Activated T-helper 1 cell treated with anti-CD3 and anti-CD28 coated beads, Interleukin-12 subunit alpha, Interleukin-12 subunit beta, Interleukin-2, Interleukin-4 antibody, amounts not matched to agents 30 ng/mL and 10 ng/mL and 1 ng/mL, durations not matched to agents 14 hours and 24 hours and 36 hours (primary cell): ENCODE measurements at regions of chr2 and their contacts with region 1.

Region 1: GRCh38 chr2:157628477-157629415 is at the start of gene ACVR1C:
- DNase-seq: peak; percentile 63
- H3K4me3 Mint-ChIP-seq: peak within 1 kb of the TSS; percentile 88
- H3K27ac Mint-ChIP-seq: peak within 1 kb of the TSS; percentile 55
- H3K4me1 Mint-ChIP-seq: peaks cover 28% of the 10 kb centered on the region
- H3K27me3 Mint-ChIP-seq: peaks cover 15% of the 10 kb centered on the region
- total RNA-seq, gene ACVR1C: 0.59 and 1.1 TPM in 2 replicates

Region 2: GRCh38 chr2:157261199-157261783 is 367.5 kb before region 1 on chr2:
- intact Hi-C with region 1: loop called (anchors 2 kb)
- DNase-seq: peak; percentile 12
- H3K4me3 Mint-ChIP-seq: peak overlapping the region; percentile 57
- H3K27ac Mint-ChIP-seq: peak overlapping the region; percentile 86
- H3K4me1 Mint-ChIP-seq: peaks cover 37% of the 10 kb centered on the region
- H3K27me3 Mint-ChIP-seq: peaks cover 2% of the 10 kb centered on the region

Region 3: GRCh38 chr2:157404363-157404762 is 224.4 kb before region 1 on chr2:
- intact Hi-C with region 1: loop called (anchors 2 kb)
- DNase-seq: peak; percentile 62
- H3K4me3 Mint-ChIP-seq: peak overlapping the region; percentile 37
- H3K27ac Mint-ChIP-seq: peak overlapping the region; percentile 86
- H3K4me1 Mint-ChIP-seq: peaks cover 72% of the 10 kb centered on the region
- H3K27me3 Mint-ChIP-seq: no peaks in the 10 kb centered on the region

Region 4: DNA sequence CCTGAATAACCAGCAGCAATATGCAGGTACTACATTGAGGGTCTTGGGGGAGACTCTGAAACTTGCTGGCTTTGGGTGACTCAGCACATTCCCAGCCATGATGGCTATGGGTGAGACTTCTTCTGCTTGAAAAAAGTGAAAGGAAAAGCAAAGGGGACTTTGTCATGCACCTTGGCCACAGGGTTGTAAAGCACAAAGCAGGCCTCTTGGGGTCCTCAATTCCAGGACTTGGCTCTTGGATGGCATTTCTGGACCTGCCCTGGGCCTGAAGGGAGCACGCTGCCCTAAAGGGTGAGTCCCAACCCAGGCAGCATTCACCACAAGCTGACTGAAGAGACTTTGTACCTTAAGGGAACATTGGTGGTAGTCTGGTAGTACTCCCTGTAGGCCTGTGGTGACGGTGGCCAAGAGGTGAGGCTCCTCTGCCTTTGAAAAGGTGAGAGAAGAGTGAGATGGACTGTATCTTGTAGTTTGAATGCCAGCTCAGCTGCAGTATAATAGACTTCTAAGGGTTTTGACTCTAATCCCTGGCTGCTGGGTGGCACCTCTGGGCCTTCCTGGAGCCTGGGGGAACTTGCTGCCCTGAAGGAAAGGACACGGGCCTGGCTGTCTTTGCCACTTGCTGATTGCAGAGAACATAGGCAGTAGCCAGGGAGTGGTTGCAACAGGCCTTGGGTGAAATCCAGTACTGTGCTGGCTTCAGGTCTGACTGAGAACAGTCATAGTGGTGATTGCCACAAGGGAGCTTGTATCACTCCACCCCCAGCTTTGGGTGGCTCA is 148.4 kb before region 1 on chr2:
- intact Hi-C with region 1: no loop called
- DNase-seq: peak; percentile 62
- H3K4me3 Mint-ChIP-seq: peak overlapping the region; percentile 83
- H3K27ac Mint-ChIP-seq: peak overlapping the region; percentile 99
- H3K4me1 Mint-ChIP-seq: peaks cover 95% of the 10 kb centered on the region
- H3K27me3 Mint-ChIP-seq: no peaks in the 10 kb centered on the region

Region 5: DNA sequence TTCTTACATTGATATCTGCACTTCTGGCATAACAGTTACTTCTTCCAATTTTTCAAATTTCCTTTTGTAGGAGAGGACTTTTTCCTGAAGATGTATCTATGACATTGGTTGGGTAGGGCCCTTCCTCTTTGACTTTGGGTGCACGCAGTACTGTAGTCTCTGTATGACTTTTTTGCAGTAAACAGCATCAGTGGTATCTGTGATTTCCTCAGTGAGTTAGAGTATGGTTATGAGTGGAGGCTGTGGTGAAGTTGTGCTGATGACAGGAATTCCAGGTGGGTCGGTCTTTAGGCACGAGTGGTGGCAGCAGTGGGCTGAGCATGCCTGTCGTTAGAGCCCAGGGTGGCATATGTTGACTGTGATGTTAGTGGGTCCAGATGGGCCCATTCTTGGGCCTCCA is 17.6 kb before region 1 on chr2:
- intact Hi-C with region 1: loop called (anchors 2 kb)
- DNase-seq: no peak
- H3K4me3 Mint-ChIP-seq: no peak overlapping the region
- H3K27ac Mint-ChIP-seq: no peak overlapping the region
- H3K4me1 Mint-ChIP-seq: peaks cover 9% of the 10 kb centered on the region
- H3K27me3 Mint-ChIP-seq: peaks cover 17% of the 10 kb centered on the region

Region 6: GRCh38 chr2:157662401-157662800 is 33.7 kb after region 1 on chr2:
- intact Hi-C with region 1: no loop called
- DNase-seq: no peak
- H3K4me3 Mint-ChIP-seq: no peak overlapping the region
- H3K27ac Mint-ChIP-seq: no peak overlapping the region
- H3K4me1 Mint-ChIP-seq: no peaks in the 10 kb centered on the region
- H3K27me3 Mint-ChIP-seq: peaks cover 4% of the 10 kb centered on the region

Region 7: DNA sequence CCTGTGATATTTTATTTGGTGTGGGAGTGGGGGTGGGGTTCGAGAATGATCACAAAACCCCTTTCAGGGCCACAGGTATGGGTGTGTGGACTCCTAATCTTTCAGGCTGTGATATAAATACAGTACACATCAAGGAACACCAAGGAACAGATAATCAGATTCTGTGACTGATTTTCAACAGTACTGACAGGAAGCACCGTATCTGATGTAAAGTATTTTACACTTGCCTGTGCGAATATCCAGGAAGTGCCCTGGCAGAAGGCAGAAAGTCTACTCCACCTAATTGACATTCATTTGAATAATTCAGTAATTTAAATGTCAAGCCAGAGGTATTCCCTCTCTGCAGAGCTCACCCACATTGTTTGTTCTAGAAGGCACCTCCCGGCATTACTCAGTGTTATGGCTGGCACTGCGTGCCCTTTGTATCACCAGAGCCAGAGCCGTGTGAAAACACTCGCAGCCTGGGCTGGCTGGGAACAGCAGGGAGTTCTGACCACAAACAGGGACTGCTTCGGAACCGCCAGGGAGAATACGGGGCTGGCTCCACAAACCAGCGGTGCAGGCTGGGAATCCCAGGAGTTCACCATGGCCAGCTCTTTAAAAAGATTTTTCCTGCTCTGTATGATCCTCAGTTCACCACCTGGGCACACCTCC is 155.6 kb after region 1 on chr2:
- intact Hi-C with region 1: loop called (anchors 5 kb)
- DNase-seq: no peak
- H3K4me3 Mint-ChIP-seq: peak overlapping the region; percentile 37
- H3K27ac Mint-ChIP-seq: peak overlapping the region; percentile 32
- H3K4me1 Mint-ChIP-seq: peaks cover 87% of the 10 kb centered on the region
- H3K27me3 Mint-ChIP-seq: no peaks in the 10 kb centered on the region

Region 8: DNA sequence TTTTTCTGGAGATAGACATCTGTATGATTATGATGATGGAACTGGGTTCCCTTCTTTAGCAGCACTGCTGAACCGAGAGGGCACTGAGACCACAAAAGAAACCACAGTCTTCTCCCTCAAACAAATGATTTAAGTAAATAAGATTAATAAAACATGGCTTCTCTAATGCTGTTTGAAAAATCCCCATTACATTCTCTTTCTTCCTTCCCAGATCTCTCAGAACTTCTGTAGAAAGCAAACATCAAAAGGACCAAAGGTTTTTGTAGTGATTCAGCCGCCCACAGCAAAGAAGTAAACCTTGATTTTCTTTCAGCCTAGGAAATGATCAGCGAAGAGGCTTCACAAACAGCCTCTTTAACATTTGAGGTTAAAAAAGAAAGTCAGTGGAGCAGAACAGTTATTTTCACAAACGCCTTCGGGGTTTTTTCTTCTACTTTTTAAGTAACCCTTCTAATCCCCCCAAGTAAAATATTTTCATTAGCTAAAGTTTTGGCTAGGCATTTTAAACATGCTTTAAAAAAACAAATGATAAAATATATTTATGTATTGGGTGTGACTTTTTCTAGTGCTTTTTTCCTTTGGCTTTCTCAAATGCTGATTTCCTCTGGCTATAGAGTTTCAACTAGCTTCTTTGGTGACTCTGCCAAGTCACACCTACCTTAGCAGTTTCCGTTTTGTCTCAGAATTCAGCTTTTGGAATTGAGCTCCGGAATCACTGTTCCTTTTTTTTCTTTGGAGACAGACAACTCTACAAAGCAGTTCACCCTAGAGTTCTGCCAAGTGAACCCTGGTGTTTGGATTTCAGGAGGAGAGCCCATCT is 562.5 kb after region 1 on chr2:
- intact Hi-C with region 1: loop called (anchors 1 kb)
- DNase-seq: peak; percentile 6
- H3K4me3 Mint-ChIP-seq: peak overlapping the region; percentile 50
- H3K27ac Mint-ChIP-seq: peak overlapping the region; percentile 40
- H3K4me1 Mint-ChIP-seq: peaks cover 28% of the 10 kb centered on the region
- H3K27me3 Mint-ChIP-seq: peaks cover 24% of the 10 kb centered on the region